GM12878 (cell line): ENCODE measurements at regions of chr1 and their contacts with region 1.

Region 1: GRCh38 chr1:24735509-24736375 is 9.5 kb upstream of the CLIC4 start:
- DNase-seq: no peak
- ATAC-seq: no peak
- H3K4me3 ChIP-seq: no peak overlapping the region
- H3K27ac ChIP-seq: peak overlapping the region; percentile 33; the same call in 1 of the 2 replicates
- H3K4me1 ChIP-seq: peaks cover 38% of the 10 kb centered on the region
- H3K27me3 ChIP-seq: no peaks in the 10 kb centered on the region
- CTCF ChIP-seq: no peak
- EP300 ChIP-seq: no peak
- POLR2A ChIP-seq: no peak
- RAD21 ChIP-seq: no peak

Region 2: DNA sequence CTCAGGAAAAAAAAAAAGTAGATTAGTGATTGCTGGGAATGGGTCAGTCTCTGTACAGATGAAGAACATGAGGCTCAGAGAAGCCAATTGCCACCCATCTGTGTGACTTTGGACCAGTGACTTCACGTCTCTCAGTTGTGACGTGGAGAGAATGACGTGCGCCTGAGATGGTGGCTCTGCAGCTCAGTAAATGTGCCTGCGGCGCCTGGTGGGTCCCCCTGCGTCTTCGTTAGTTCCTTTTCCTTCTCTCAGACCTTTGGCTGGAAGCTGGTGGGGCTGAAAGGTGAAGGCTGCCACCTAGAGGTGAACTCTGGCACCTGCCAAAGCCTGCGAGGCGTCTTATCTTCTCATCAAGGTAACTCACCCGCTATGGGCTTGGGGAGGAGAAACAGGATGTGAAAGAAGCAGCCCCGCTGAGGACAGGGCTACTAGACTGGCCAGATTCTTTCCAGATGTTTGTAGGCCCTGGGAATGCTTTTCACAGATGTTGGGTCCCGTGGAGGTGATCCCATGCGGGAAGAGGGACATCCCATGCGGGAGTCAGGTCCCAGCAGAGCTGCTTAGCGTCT is 1196.0 kb before region 1 on chr1:
- CTCF ChIA-PET with region 1: no interaction called
- POLR2A ChIA-PET with region 1: no interaction called
- RAD21 ChIA-PET with region 1: no interaction called
- SMC1A ChIA-PET with region 1: no interaction called
- in situ Hi-C with region 1: no loop called
- intact Hi-C with region 1: no loop called
- DNase-seq: peak; percentile 92
- ATAC-seq: peak; percentile 93
- H3K4me3 ChIP-seq: no peak overlapping the region
- H3K27ac ChIP-seq: no peak overlapping the region
- H3K4me1 ChIP-seq: peaks cover 7% of the 10 kb centered on the region
- H3K27me3 ChIP-seq: no peaks in the 10 kb centered on the region
- CTCF ChIP-seq: peak; percentile 96 to 99 (median 99); a peak in 5 of 6 replicates
- EP300 ChIP-seq: peak in 1 of 2 experiments; percentile 33; a peak in 1 of 4 replicates
- POLR2A ChIP-seq: no peak
- RAD21 ChIP-seq: peak; percentile 98

Region 3: GRCh38 chr1:24705260-24706073 is 30.3 kb before region 1 on chr1:
- CTCF ChIA-PET with region 1: interaction called, 3 read pairs
- POLR2A ChIA-PET with region 1: interaction called, 14 read pairs
- RAD21 ChIA-PET with region 1: interaction called, 7 read pairs
- SMC1A ChIA-PET with region 1: interaction called, 7 read pairs
- in situ Hi-C with region 1: no loop called
- intact Hi-C with region 1: no loop called
- DNase-seq: peak; percentile 82
- ATAC-seq: peak; percentile 99
- H3K4me3 ChIP-seq: peak overlapping the region; percentile 8; the same call in 1 of the 2 replicates
- H3K27ac ChIP-seq: no peak overlapping the region
- H3K4me1 ChIP-seq: peaks cover 3% of the 10 kb centered on the region
- H3K27me3 ChIP-seq: no peaks in the 10 kb centered on the region
- CTCF ChIP-seq: no peak
- EP300 ChIP-seq: no peak
- POLR2A ChIP-seq: no peak
- RAD21 ChIP-seq: no peak

Region 4: GRCh38 chr1:25695090-25695770 is 959.5 kb after region 1 on chr1:
- CTCF ChIA-PET with region 1: no interaction called
- POLR2A ChIA-PET with region 1: no interaction called
- RAD21 ChIA-PET with region 1: no interaction called
- SMC1A ChIA-PET with region 1: no interaction called
- in situ Hi-C with region 1: no loop called
- intact Hi-C with region 1: no loop called
- DNase-seq: no peak
- ATAC-seq: no peak
- H3K4me3 ChIP-seq: no peak overlapping the region
- H3K27ac ChIP-seq: no peak overlapping the region
- H3K4me1 ChIP-seq: no peaks in the 10 kb centered on the region
- H3K27me3 ChIP-seq: peaks cover 4 to 15% of the 10 kb centered on the region in 2 experiments
- CTCF ChIP-seq: no peak
- EP300 ChIP-seq: no peak
- POLR2A ChIP-seq: no peak
- RAD21 ChIP-seq: no peak